Psoas muscle (tissue), 8 donors: ENCODE measurements at regions of chr22 and their contacts with region 1.

Region 1: DNA sequence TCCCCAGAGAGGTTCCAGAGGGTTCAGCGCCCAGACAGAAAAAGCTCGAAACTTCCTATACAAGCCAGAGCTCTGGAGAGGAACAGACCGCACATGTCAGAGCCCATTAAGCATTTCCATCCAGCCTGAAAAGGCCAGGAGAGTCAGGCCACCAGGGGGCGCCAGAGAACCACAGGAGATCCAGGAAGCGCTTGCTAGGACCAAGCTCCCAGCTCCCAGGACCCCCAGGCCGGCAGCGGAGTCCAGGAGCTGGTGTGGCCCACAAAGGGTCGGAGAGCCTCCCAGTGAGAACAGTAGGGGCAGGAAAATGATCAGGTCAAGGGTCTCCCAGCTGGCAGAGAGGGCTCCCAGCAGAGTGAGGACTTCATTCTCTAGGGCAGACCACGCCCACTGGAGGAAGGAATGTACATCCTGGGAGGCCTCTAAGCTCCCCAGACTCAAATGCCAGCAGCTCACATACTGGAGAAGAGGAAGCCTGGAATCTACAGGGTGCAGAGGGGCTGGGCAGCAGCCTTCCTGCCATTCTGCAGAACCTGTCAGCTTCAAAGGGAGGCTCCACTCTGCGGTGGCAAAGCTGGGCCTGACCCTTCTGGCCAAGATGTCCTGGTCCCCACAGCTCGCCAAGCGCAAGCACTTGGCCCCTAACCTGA is 2.1 kb upstream of the MEI1 start:
- DNase-seq: peak; percentile 94 to 95
- ATAC-seq: peak; percentile 79 to 91 (median 82)
- H3K4me3 ChIP-seq: peak overlapping the region; percentile 42
- H3K27ac ChIP-seq: peak overlapping the region; percentile 41
- H3K4me1 ChIP-seq: peaks cover 8% of the 10 kb centered on the region
- H3K27me3 ChIP-seq: no peaks in the 10 kb centered on the region
- CTCF ChIP-seq: peak; percentile 97

Region 2: DNA sequence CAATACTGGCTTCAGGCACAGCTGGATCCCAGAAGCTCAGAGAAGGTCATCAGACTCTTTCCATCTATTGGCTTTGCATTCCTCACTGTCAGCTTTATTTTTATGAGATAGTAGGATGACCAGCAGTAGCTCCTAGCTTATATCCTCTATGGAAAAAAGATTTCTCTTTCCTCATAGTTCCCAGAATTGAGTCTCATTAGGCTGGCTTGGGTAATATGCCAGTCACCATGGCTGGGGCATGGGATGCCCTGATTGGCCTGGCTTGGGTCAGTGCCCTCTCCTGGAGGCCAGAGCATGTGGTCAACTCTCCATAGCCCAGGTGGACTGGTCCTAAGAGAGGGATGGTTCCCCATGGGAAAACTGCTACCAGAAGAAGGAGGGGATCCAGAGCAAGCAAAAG is 89.2 kb after region 1 on chr22:
- intact Hi-C with region 1: no loop called
- DNase-seq: no peak
- ATAC-seq: no peak
- H3K4me3 ChIP-seq: no peak overlapping the region
- H3K27ac ChIP-seq: no peak overlapping the region
- H3K4me1 ChIP-seq: no peaks in the 10 kb centered on the region
- H3K27me3 ChIP-seq: no peaks in the 10 kb centered on the region
- CTCF ChIP-seq: no peak

Region 3: DNA sequence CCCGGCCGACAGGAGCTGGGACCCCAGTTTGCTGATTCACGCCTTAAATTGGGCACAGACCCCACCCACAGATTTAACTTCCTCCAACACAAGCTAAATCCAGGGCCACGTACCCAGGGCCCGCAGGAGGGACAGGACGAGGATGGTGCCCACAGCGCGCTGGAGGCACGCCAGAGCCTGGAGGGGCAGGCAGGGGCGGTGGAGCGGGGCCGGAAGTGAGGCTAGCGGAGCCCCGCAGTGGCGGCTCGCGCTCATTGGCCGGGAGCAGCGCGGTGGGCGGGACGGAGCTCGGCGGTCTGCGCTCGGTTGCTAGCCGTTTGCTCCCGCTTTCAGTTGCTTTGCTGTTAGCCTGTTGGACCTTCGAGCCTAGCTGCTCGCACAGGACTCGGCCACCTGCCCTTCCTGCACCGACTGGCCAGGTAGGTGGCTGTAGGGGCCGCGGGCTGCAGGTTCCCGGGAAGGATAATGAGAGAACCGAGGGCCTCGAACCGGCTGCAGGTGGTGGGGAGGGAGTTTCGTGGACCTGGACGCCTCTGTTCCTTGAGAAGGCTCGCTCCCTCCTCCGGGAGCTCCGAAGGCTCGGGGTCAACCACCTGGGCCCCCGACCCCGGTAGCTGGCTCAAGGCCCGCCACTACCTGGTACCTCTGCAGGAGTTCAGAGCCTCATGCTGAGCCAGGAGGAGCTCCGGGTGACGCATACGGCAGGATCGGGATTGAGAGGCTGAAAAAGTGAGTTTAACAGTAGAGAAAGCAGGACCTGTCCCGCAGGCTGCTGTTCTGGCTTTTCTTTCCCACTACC is 103.3 kb after region 1 on chr22 and contains the start of gene CCDC134:
- intact Hi-C with region 1: loop called (anchors 5 to 10 kb)
- DNase-seq: peak; percentile 95 to 96
- ATAC-seq: peak; percentile 96 to 98 (median 98)
- H3K4me3 ChIP-seq: peak within 1 kb of the TSS; percentile 91
- H3K27ac ChIP-seq: peak within 1 kb of the TSS; percentile 94
- H3K4me1 ChIP-seq: peaks cover 14% of the 10 kb centered on the region
- H3K27me3 ChIP-seq: no peaks in the 10 kb centered on the region
- CTCF ChIP-seq: no peak
- total RNA-seq, gene CCDC134: 2.8 to 7.7 (median 5.5) TPM

Region 4: DNA sequence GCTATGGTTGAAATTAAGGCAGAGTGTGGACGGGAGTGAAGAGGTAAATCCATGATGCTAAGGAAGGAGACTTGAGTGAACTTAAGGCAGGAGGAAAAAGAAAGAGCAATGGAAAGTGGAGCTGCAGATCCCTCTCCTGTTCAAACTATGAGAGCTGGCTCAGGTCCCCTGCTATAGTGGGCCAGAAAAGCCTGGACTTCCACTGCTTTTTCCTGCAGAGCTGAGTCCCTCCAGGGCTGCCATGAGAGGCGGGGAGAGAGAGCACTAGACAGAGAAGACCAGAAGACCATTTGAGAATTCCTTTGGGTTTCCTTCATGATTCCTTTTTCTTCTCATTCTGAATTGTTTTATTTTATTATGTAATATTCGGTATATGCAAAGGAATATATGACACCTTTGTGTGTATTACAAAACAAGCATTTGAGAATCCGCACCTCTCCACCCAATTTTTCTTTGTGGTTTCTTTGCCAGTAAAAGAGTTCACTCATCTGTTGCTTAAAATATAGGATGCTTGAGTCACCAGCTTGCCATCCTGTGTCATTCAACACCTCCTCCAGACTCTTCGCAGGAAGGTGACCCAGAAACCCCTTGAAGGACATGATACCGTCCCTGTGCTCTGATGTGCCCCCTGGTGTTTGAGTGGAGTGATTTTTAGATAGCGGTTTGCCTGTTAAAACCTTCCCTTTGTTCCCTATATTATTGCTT is 160.1 kb after region 1 on chr22:
- intact Hi-C with region 1: no loop called
- DNase-seq: peak in 1 of 2 donors; percentile 39
- ATAC-seq: peak; percentile 86 to 88 (median 87)
- H3K4me3 ChIP-seq: no peak overlapping the region
- H3K27ac ChIP-seq: peak overlapping the region; percentile 61
- H3K4me1 ChIP-seq: peaks cover 25% of the 10 kb centered on the region
- H3K27me3 ChIP-seq: no peaks in the 10 kb centered on the region
- CTCF ChIP-seq: peak; percentile 53